Esophagus muscularis mucosa (tissue), 4 donors: ENCODE measurements at regions of chr16 and their contacts with region 1.

Region 1: GRCh38 chr16:14300705-14301168 is 229.6 kb downstream of the MRTFB start:
- DNase-seq: no peak
- H3K4me3 ChIP-seq: peak overlapping the region; percentile 99
- H3K27ac ChIP-seq: peak overlapping the region; percentile 90 to 94 (median 92)
- H3K4me1 ChIP-seq: peaks cover 17 to 41% (median 34%) of the 10 kb centered on the region in 4 donors
- H3K27me3 ChIP-seq: no peaks in the 10 kb centered on the region
- CTCF ChIP-seq: peak; percentile 70 to 87 (median 72)
- EP300 ChIP-seq: no peak
- POLR2A ChIP-seq: no peak

Region 2: DNA sequence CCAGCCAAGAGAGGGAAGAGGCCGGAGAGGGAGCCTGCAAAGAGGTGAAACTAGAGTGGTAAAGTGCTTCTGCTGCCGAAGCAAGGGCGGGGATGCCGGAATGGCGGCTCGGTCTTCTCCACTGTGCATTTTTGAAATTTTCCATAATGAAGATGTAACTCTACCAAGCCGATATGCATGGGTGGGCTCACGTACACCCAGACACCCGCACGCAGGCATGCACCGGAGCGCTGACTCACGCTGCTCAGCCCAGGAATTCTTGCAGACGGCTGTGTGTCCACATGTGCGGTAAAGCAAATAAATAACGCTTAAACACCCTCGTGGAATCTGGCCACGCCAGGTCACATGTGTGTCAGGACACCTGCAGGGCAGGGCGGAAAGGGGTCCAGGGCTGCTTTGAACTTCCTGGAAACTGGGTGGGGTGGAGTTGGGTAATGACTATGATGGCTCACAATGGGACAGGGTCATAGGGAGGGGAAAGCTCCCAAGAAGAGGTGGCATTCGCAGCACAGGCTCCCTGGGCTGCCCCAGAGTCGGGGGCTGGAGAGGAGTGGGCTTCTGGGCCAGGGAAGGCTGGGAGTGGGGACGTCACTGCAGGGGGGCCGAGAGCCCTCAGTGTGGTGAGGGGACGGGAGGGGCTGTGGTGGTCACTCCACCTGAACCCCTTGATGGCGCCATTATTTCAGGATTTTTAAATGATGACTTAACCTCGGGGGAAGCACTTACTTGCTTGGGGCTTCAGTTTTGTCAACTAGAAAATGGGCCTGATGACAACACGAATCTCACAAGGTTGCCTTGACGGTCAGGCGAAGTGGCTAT is 63.9 kb after region 1 on chr16:
- intact Hi-C with region 1: loop called (anchors 5 kb)
- DNase-seq: no peak
- H3K4me3 ChIP-seq: no peak overlapping the region
- H3K27ac ChIP-seq: peak overlapping the region in 1 of 4 donors; percentile 36
- H3K4me1 ChIP-seq: peaks cover 0 to 26% (median 20%) of the 10 kb centered on the region in 4 donors
- H3K27me3 ChIP-seq: no peaks in the 10 kb centered on the region
- CTCF ChIP-seq: no peak
- EP300 ChIP-seq: no peak
- POLR2A ChIP-seq: no peak

Region 3: DNA sequence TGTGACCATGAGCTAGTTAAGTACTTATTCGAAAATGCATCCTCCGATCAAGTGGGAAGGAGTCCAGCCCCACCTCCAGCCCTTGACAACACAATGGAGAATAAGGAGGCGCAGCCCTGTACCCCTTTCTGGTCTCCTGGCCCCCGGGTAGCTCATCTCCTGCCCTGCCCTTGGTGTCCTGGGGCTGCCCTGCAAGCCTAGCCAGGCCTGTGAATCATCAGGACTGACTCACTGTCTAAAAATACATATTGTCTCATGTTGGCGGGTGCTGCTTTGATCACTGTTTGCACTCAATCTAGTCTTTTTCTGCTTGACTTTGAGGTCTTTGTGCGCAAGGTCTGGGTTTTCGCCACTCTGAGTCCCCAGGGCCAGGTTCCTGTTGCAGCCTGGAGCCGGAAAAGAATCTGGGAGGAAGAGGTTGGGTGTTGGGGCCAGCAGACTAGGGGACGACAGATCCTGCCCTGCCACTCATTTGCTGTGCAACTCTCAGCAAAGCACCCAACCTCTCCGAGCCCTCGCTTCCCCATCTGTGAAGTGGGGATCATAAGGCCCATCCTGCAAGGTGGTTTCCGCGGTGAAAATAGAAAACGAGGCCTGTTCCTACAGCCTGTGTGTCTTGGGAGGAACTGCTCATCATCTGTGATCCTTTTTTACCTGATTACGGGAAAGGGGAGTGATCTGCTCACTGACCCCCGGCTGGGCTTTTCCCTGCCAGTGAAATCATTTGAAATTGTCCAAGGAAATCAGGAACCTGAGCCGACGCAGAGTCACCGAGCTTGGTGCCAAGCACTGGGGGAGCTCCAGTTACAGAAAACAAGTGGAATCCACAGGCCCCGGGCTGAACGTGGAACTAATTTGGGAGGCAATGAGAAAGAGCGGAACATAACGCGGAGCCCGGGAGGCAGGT is 98.9 kb after region 1 on chr16:
- intact Hi-C with region 1: no loop called
- DNase-seq: no peak
- H3K4me3 ChIP-seq: no peak overlapping the region
- H3K27ac ChIP-seq: peak overlapping the region; percentile 52 to 70 (median 60)
- H3K4me1 ChIP-seq: peaks cover 14 to 30% (median 19%) of the 10 kb centered on the region in 4 donors
- H3K27me3 ChIP-seq: no peaks in the 10 kb centered on the region
- CTCF ChIP-seq: no peak
- EP300 ChIP-seq: no peak
- POLR2A ChIP-seq: no peak

Region 4: GRCh38 chr16:14523632-14524031 is 222.9 kb after region 1 on chr16:
- intact Hi-C with region 1: no loop called
- DNase-seq: no peak
- H3K4me3 ChIP-seq: no peak overlapping the region
- H3K27ac ChIP-seq: no peak overlapping the region
- H3K4me1 ChIP-seq: peaks cover 14 to 30% (median 26%) of the 10 kb centered on the region in 4 donors
- H3K27me3 ChIP-seq: no peaks in the 10 kb centered on the region
- CTCF ChIP-seq: no peak
- EP300 ChIP-seq: no peak
- POLR2A ChIP-seq: no peak